ENCODE measurements at regions of chr10 and their contacts with region 1.

Region 1: GRCh38 chr10:74451127-74451829 is 300.3 kb downstream of the ADK start:
- DNase-seq: no peak
- ATAC-seq: no peak
- H3K4me3 ChIP-seq: no peak overlapping the region
- H3K27ac ChIP-seq: no peak overlapping the region
- H3K4me1 ChIP-seq: no peaks in the 10 kb centered on the region
- H3K27me3 ChIP-seq: no peaks in the 10 kb centered on the region
- CTCF ChIP-seq: no peak

Region 2: GRCh38 chr10:73931767-73932619 is 519.3 kb before region 1 on chr10:
- CTCF ChIA-PET with region 1: no interaction called
- POLR2A ChIA-PET with region 1: interaction called, 12 read pairs
- in situ Hi-C with region 1: no loop called
- intact Hi-C with region 1: no loop called
- DNase-seq: no peak
- ATAC-seq: peak; percentile 37; the same call in 1 of the 2 replicates
- H3K4me3 ChIP-seq: no peak overlapping the region
- H3K27ac ChIP-seq: peak overlapping the region; percentile 23; the same call in 1 of the 2 replicates
- H3K4me1 ChIP-seq: peaks cover 2% of the 10 kb centered on the region; the same call in 1 of the 2 replicates
- H3K27me3 ChIP-seq: no peaks in the 10 kb centered on the region
- CTCF ChIP-seq: no peak

Region 3: GRCh38 chr10:74306227-74306982 is 144.9 kb before region 1 on chr10:
- CTCF ChIA-PET with region 1: no interaction called
- POLR2A ChIA-PET with region 1: no interaction called
- in situ Hi-C with region 1: no loop called
- intact Hi-C with region 1: no loop called
- DNase-seq: no peak
- ATAC-seq: no peak
- H3K4me3 ChIP-seq: no peak overlapping the region
- H3K27ac ChIP-seq: no peak overlapping the region
- H3K4me1 ChIP-seq: no peaks in the 10 kb centered on the region
- H3K27me3 ChIP-seq: no peaks in the 10 kb centered on the region
- CTCF ChIP-seq: no peak

Measured in Panc1 (cell line).